CD8-positive, alpha-beta memory T cell (primary cell): ENCODE measurements at regions of chr11 and their contacts with region 1.

Region 1: DNA sequence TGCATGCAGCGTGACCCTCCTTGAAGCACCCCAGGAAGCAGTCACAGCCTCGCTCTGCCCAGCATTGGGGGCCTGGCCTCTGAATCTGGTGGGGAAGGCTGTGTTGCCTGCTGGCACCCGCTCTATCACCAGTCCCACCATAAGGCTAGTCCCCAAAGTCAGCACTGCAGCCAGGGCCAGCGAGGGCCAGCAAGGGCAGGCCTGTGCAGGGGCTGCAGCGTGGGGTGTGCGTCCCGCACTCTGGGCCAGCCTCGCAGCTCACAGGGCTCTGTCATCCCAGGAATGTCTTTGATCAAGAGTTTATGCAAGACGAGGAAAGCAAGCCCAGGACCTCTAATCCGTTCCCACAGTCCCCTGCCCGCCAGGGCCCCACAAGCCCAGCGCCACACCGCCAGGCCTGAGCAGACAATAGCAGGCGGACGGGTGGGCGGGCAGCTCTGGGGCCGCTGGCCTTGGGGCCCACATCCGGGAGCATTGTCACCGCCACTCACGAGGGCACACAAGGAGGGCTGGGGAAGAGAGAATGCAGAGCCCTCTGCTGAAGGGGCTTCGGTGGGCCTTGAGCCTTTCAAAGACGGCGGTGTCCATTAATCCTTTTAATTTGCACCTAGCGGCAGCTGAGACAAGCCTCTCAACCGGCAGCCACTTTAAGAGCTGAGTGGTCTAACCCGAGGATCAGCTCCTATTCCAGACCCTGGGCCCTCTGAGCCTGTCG is 17.1 kb downstream of the LTO1 start:
- DNase-seq: peak in 1 of 5 donors; percentile 8
- H3K4me3 ChIP-seq: no peak overlapping the region
- H3K4me3 Mint-ChIP-seq: no peak overlapping the region
- H3K27ac ChIP-seq: no peak overlapping the region
- H3K27ac Mint-ChIP-seq: no peak overlapping the region
- H3K4me1 ChIP-seq: no peaks in the 10 kb centered on the region
- H3K4me1 Mint-ChIP-seq: no peaks in the 10 kb centered on the region
- H3K27me3 ChIP-seq: no peaks in the 10 kb centered on the region
- H3K27me3 Mint-ChIP-seq: no peaks in the 10 kb centered on the region

Region 2: GRCh38 chr11:69576069-69576782 is 81.8 kb before region 1 on chr11:
- CTCF ChIA-PET with region 1: no interaction called
- POLR2A ChIA-PET with region 1: no interaction called
- DNase-seq: peak in 1 of 5 donors; percentile 33
- H3K4me3 ChIP-seq: no peak overlapping the region
- H3K4me3 Mint-ChIP-seq: no peak overlapping the region
- H3K27ac ChIP-seq: no peak overlapping the region
- H3K27ac Mint-ChIP-seq: no peak overlapping the region
- H3K4me1 ChIP-seq: no peaks in the 10 kb centered on the region
- H3K4me1 Mint-ChIP-seq: no peaks in the 10 kb centered on the region
- H3K27me3 ChIP-seq: no peaks in the 10 kb centered on the region
- H3K27me3 Mint-ChIP-seq: peaks cover 14 to 50% of the 10 kb centered on the region in 2 donors

Region 3: GRCh38 chr11:69630009-69630408 is 28.1 kb before region 1 on chr11:
- CTCF ChIA-PET with region 1: no interaction called
- POLR2A ChIA-PET with region 1: no interaction called
- DNase-seq: no peak
- H3K4me3 ChIP-seq: no peak overlapping the region
- H3K4me3 Mint-ChIP-seq: no peak overlapping the region
- H3K27ac ChIP-seq: no peak overlapping the region
- H3K27ac Mint-ChIP-seq: no peak overlapping the region
- H3K4me1 ChIP-seq: no peaks in the 10 kb centered on the region
- H3K4me1 Mint-ChIP-seq: no peaks in the 10 kb centered on the region
- H3K27me3 ChIP-seq: no peaks in the 10 kb centered on the region
- H3K27me3 Mint-ChIP-seq: peaks cover 22 to 59% of the 10 kb centered on the region in 2 donors

Region 4: DNA sequence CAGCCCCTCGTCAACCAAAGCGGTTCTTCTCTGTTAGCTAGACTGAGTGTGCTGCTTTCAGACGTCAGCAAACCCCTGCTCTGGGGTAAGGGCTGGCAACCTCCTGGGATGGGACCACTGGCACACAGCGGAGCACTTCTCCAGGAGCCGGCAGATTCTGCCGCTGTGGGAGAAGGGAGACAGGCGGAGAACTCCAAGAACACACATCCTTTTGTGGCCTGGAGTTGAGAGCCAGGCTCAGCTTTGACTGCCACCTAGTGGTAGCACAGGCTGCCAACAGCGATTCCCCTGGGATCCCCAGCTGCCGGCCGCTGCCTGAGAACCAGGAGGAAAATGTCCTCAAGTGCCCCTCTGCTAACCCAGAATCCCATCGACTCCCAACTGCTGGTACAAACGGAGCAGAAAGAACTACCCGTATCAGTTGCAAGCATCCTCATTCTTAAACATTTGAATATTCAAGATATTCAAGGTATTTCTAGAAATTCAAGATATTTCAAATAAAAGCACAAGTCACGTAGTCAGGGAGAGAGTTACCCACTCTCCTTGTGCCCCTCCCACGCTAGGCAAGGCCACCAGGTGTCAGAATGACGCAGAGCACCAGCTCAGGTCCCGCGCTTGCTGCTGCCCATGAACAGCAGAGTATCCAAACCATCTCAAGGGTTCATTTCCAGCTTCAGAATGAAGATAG is 12.2 kb after region 1 on chr11:
- CTCF ChIA-PET with region 1: interaction called, 15 read pairs
- POLR2A ChIA-PET with region 1: no interaction called
- DNase-seq: peak; percentile 36 to 71 (median 42)
- H3K4me3 ChIP-seq: no peak overlapping the region
- H3K4me3 Mint-ChIP-seq: peak overlapping the region in 1 of 7 donors; percentile 62
- H3K27ac ChIP-seq: no peak overlapping the region
- H3K27ac Mint-ChIP-seq: peak overlapping the region in 7 of 8 donors; percentile 17 to 77 (median 64)
- H3K4me1 ChIP-seq: peaks cover 22% of the 10 kb centered on the region
- H3K4me1 Mint-ChIP-seq: peaks cover 28 to 48% (median 46%) of the 10 kb centered on the region in 3 donors
- H3K27me3 ChIP-seq: no peaks in the 10 kb centered on the region
- H3K27me3 Mint-ChIP-seq: no peaks in the 10 kb centered on the region

Region 5: GRCh38 chr11:69892237-69893035 is 234.4 kb after region 1 on chr11:
- CTCF ChIA-PET with region 1: no interaction called
- POLR2A ChIA-PET with region 1: no interaction called
- DNase-seq: no peak
- H3K4me3 ChIP-seq: no peak overlapping the region
- H3K4me3 Mint-ChIP-seq: no peak overlapping the region
- H3K27ac ChIP-seq: no peak overlapping the region
- H3K27ac Mint-ChIP-seq: no peak overlapping the region
- H3K4me1 ChIP-seq: no peaks in the 10 kb centered on the region
- H3K4me1 Mint-ChIP-seq: peaks cover 0 to 7% (median 5%) of the 10 kb centered on the region in 3 donors
- H3K27me3 ChIP-seq: peaks cover 10% of the 10 kb centered on the region
- H3K27me3 Mint-ChIP-seq: peaks cover 12 to 52% of the 10 kb centered on the region in 2 donors